HepG2 (cell line): ENCODE measurements at regions of chr10 and their contacts with region 1.

Region 1: DNA sequence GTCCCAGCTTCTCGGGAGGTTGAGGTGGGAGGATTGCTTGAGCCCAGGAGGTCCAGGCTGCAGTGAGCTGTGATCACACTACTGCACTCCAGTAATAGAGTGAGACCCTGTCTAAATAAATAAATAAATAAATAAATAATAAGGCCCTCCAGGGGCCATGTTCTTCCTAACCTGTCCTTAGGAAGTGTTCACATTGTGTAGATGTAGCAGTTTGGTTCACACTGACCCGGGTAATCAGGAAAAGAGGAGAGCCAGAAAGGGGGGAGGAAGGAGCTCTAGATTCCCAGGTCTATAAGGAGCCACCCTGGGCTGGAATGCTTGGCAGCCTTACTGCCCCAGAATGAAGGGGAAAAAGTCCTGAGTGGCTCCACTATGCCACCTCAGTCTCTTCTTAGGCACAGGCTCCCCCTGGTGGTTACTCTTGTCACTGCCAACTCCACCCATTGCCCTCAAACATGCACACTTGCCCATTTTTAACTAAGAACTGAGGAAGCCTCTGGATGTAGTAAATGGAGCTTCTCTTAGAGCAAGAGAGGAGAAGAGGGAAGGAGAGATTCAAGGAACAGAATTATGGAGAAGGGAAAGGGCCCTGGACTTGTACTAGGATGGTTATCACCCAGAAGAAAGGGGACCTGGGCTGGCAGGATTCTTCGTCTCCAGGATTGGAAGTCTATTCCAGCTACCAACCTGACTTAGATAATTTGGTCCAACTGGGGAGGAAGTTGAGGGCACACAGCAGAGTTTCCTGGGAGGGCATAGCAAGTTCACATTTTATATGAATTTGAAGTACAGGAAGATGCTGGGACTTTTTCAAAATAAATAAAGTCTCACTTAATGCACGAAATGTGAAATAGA is 7.8 kb downstream of the HPS6 start:
- DNase-seq: peak; percentile 51
- ATAC-seq: peak; percentile 89
- H3K4me3 ChIP-seq: no peak overlapping the region
- H3K27ac ChIP-seq: no peak overlapping the region
- H3K4me1 ChIP-seq: no peaks in the 10 kb centered on the region
- H3K27me3 ChIP-seq: no peaks in the 10 kb centered on the region
- CTCF ChIP-seq: peak; percentile 90
- EP300 ChIP-seq: no peak
- POLR2A ChIP-seq: no peak
- RAD21 ChIP-seq: peak; percentile 64

Region 2: GRCh38 chr10:101889256-101890210 is 183.4 kb before region 1 on chr10:
- CTCF ChIA-PET with region 1: no interaction called
- POLR2A ChIA-PET with region 1: no interaction called
- in situ Hi-C with region 1: no loop called
- intact Hi-C with region 1: loop called (anchors 1 kb)
- DNase-seq: peak; percentile 64
- ATAC-seq: peak; percentile 83
- H3K4me3 ChIP-seq: no peak overlapping the region
- H3K27ac ChIP-seq: no peak overlapping the region
- H3K4me1 ChIP-seq: peaks cover 9% of the 10 kb centered on the region
- H3K27me3 ChIP-seq: no peaks in the 10 kb centered on the region
- CTCF ChIP-seq: peak; percentile 72
- EP300 ChIP-seq: no peak
- POLR2A ChIP-seq: no peak
- RAD21 ChIP-seq: 0 out of 2 replicates have a peak, but pooled peaks have one; percentile 28